A549 (cell line): ENCODE measurements at regions of chr16 and their contacts with region 1.

Region 1: GRCh38 chr16:4586291-4586690 is 28.4 kb downstream of the UBALD1 start:
- DNase-seq: no peak
- ATAC-seq: no peak
- H3K4me3 ChIP-seq: no peak overlapping the region
- H3K27ac ChIP-seq: no peak overlapping the region
- H3K4me1 ChIP-seq: no peaks in the 10 kb centered on the region
- CTCF ChIP-seq: no peak
- EP300 ChIP-seq: no peak
- POLR2A ChIP-seq: no peak
- RAD21 ChIP-seq: no peak

Region 2: GRCh38 chr16:4500272-4500671 is 86.0 kb before region 1 on chr16:
- CTCF ChIA-PET with region 1: interaction called, 126 read pairs
- POLR2A ChIA-PET with region 1: no interaction called
- DNase-seq: peak; percentile 33 to 67
- ATAC-seq: peak; percentile 90 to 93
- H3K4me3 ChIP-seq: no peak overlapping the region
- H3K27ac ChIP-seq: peak overlapping the region in 1 of 2 experiments; percentile 44; a peak in 1 of 6 replicates
- H3K4me1 ChIP-seq: peaks cover 36% of the 10 kb centered on the region
- CTCF ChIP-seq: no peak
- EP300 ChIP-seq: no peak
- POLR2A ChIP-seq: no peak
- RAD21 ChIP-seq: no peak

Region 3: DNA sequence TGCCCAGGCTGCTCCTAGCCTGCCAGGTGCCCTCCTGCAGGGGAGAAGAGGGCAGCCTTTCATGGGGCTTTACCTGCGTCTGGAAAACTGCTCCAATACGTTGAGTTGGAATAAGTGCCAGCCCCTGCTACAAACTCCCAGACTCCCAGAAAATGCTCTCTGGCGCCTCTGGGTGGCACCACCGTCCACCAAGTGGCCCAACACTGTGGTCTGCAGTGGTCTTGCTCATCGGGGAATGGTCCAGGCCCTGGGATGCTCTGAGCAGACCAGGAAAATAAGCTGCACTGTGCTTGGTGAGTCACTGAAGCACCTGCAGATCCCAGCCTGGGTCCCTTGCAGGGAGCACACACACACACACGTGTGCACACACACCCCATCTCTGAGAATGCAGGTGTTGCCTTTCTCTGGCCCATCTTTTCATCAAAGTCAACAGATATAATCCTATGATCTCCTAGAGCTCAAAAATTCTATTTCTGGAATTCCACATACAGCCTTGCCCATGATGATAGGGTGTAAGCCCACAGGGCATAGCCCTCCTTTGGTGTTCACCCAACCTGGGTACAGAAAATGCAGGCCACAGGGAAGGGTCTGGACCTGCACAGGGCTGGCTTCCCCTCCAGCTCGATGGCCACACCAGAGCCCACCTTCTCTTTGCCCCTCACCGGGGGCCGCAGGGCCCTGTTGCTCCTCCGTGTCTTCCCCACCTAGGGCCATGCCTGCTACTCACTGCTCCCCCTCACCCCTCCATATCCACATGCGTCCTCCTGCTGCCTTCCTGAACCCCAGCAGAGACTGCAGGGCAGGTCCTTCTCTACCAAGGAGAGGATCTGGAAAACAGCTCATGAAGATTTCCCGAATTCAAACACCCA is 68.2 kb before region 1 on chr16:
- CTCF ChIA-PET with region 1: interaction called, 26 read pairs
- POLR2A ChIA-PET with region 1: no interaction called
- DNase-seq: peak; percentile 40 to 47
- ATAC-seq: peak; percentile 77 to 89; a peak in 4 of 6 replicates
- H3K4me3 ChIP-seq: no peak overlapping the region
- H3K27ac ChIP-seq: no peak overlapping the region
- H3K4me1 ChIP-seq: no peaks in the 10 kb centered on the region
- CTCF ChIP-seq: peak; percentile 55
- EP300 ChIP-seq: no peak
- POLR2A ChIP-seq: no peak
- RAD21 ChIP-seq: peak; percentile 69 to 80

Region 4: GRCh38 chr16:4550591-4550990 is 35.7 kb before region 1 on chr16:
- CTCF ChIA-PET with region 1: interaction called, 18 read pairs
- POLR2A ChIA-PET with region 1: no interaction called
- DNase-seq: no peak
- ATAC-seq: 0 out of 6 replicates have a peak, but pooled peaks of 1 of the 2 experiments have one; percentile 15
- H3K4me3 ChIP-seq: no peak overlapping the region
- H3K27ac ChIP-seq: no peak overlapping the region
- H3K4me1 ChIP-seq: no peaks in the 10 kb centered on the region
- CTCF ChIP-seq: no peak
- EP300 ChIP-seq: no peak
- POLR2A ChIP-seq: no peak
- RAD21 ChIP-seq: no peak

Region 5: DNA sequence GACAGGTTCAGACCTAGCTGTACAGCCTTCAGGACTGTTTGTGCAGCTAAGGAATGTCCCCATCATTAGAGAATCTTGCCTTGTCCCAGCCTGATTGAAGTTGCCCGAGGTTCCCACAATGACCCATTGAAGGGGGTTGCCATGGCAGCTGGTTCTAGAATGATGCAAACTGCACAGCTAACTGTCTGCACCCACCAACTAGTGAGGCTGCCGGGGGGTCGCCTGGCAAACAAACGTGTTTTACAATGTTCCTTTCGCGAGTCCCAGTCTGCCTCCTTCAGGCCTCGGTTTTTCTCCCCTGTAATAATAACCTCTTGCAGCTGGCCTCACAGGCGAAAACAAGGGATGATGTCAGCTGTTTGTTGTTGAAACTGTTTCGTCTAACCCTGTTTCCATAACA is 24.7 kb before region 1 on chr16:
- CTCF ChIA-PET with region 1: interaction called, 16 read pairs
- POLR2A ChIA-PET with region 1: no interaction called
- DNase-seq: no peak
- ATAC-seq: 0 out of 6 replicates have a peak, but pooled peaks of 1 of the 2 experiments have one; percentile 43
- H3K4me3 ChIP-seq: no peak overlapping the region
- H3K27ac ChIP-seq: no peak overlapping the region
- H3K4me1 ChIP-seq: no peaks in the 10 kb centered on the region
- CTCF ChIP-seq: no peak
- EP300 ChIP-seq: no peak
- POLR2A ChIP-seq: no peak
- RAD21 ChIP-seq: no peak

Region 6: GRCh38 chr16:4597174-4597573 is 10.9 kb after region 1 on chr16:
- CTCF ChIA-PET with region 1: interaction called, 44 read pairs
- POLR2A ChIA-PET with region 1: no interaction called
- DNase-seq: no peak
- ATAC-seq: no peak
- H3K4me3 ChIP-seq: no peak overlapping the region
- H3K27ac ChIP-seq: no peak overlapping the region
- H3K4me1 ChIP-seq: 0 out of 3 replicates have a peak, but pooled peaks cover 6% of the 10 kb centered on the region
- CTCF ChIP-seq: no peak
- EP300 ChIP-seq: no peak
- POLR2A ChIP-seq: no peak; the same call in 1 of the 2 replicates
- RAD21 ChIP-seq: no peak

Region 7: DNA sequence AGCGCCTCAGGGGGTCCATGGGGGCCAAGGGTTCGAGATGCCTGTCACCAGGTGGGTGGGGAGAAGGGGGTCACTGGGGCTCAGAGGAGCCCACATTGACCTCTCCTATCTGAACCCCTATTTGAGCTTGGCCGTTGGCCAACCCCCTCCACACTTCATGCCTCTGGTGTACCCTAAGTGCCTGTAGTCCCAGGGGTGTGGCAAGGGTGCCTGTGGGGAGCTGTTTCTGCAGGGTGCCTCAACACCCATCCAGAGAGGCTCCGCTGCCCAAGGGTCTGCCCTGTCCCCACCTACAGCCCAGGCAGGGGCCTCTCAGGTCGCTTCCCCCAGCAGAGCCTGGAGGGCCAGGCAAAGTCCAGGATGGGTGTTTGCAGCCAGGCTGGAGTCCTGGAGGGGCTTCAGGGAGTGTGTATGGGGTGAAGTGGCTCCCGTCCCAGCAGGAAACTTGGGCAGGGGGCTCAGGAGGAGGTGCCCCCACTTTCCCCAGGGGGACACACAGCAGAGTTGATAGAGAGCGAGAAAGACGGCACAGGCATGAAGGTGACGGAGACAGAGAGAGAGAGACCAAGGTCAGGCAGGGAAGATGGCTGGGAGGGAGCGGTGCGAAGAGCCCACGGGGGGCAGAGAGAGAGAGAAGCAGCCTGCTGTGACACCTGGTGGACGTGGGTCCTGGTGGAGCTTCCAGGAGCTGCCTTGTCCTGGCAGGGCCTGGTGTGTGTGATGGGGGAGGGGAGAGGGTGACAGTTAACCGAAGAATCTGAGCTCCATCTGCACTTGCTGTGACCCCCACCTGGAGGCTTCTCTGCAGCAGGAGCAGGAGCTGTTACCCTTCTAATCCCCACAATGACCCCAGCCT is 201.6 kb after region 1 on chr16 and contains the start of gene SEPTIN12:
- CTCF ChIA-PET with region 1: no interaction called
- POLR2A ChIA-PET with region 1: no interaction called
- DNase-seq: no peak
- ATAC-seq: peak; percentile 26 to 36; a peak in 4 of 6 replicates
- H3K4me3 ChIP-seq: no peak within 1 kb of the TSS
- H3K27ac ChIP-seq: peak within 1 kb of the TSS; percentile 49 to 80; a peak in 3 of 6 replicates
- H3K4me1 ChIP-seq: peaks cover 26% of the 10 kb centered on the region
- CTCF ChIP-seq: no peak
- EP300 ChIP-seq: no peak
- POLR2A ChIP-seq: no peak
- RAD21 ChIP-seq: no peak
- polyA plus RNA-seq, gene SEPTIN12: not detected in 2 replicates